Gastrocnemius medialis (tissue), 4 donors: ENCODE measurements at regions of chr12 and their contacts with region 1.

Region 1: GRCh38 chr12:53047221-53048042 is 2.4 kb upstream of the TNS2 start:
- DNase-seq: peak; percentile 72 to 82
- ATAC-seq: peak; percentile 17 to 20
- H3K4me3 ChIP-seq: peak overlapping the region; percentile 83 to 97 (median 95)
- H3K27ac ChIP-seq: peak overlapping the region; percentile 100
- H3K4me1 ChIP-seq: peaks cover 42 to 63% of the 10 kb centered on the region in 2 donors
- H3K27me3 ChIP-seq: no peaks in the 10 kb centered on the region
- CTCF ChIP-seq: peak in 4 of 5 experiments; percentile 35 to 77 (median 57)
- POLR2A ChIP-seq: peak; percentile 81 to 89

Region 2: GRCh38 chr12:52041695-52042123 is 1005.7 kb before region 1 on chr12:
- in situ Hi-C with region 1: no loop called
- intact Hi-C with region 1: loop called (anchors 5 kb)
- DNase-seq: no peak
- ATAC-seq: no peak
- H3K4me3 ChIP-seq: no peak overlapping the region
- H3K27ac ChIP-seq: peak overlapping the region; percentile 90 to 98 (median 94)
- H3K4me1 ChIP-seq: peaks cover 46 to 51% of the 10 kb centered on the region in 2 donors
- H3K27me3 ChIP-seq: no peaks in the 10 kb centered on the region
- CTCF ChIP-seq: no peak
- POLR2A ChIP-seq: no peak

Region 3: DNA sequence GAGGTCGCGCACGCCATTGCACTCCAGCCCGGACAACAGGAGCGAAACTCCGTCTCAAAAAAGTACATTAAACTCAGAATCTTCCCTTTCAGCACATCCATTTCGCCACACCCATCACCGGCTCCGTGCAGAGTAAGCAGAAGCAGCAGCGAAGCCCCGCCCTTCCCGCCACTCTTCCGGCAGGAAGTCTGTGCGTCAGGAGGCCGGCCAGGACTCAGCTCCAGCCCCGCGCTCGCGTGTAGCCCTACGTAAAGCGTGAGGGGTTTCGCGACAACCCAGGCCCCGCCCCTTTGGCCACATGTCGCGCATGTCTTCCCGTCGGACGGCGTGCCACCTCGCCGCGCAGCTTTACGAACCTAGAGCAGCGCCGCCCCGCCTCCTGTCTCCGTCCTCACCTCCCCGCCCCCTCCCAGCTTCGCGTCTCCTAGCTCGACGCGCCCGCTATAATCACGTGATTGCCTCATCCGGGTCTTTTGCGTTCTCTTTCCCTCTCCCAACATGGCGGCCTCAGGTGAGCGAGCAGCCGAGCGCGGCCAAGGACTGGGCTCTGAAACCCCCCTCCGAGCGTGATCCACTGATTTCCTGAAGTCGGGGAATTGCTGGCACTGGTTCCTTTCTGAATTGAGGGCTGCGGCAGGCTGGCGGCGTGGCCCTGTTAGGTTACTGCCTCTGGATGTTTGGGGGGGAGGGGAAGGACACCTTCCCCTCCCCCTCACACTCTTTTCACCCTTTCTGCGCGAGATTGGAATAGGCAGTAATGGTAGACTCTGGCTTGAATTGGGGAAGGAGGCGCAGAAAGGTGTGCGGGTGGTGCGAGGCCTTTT is 41.2 kb before region 1 on chr12 and contains the start of gene EIF4B:
- in situ Hi-C with region 1: no loop called
- intact Hi-C with region 1: loop called (anchors 2 kb)
- DNase-seq: peak; percentile 100
- ATAC-seq: peak; percentile 92 to 93
- H3K4me3 ChIP-seq: peak within 1 kb of the TSS; percentile 86 to 97 (median 94)
- H3K27ac ChIP-seq: peak within 1 kb of the TSS; percentile 95 to 98 (median 96)
- H3K4me1 ChIP-seq: peaks cover 45 to 46% of the 10 kb centered on the region in 2 donors
- H3K27me3 ChIP-seq: no peaks in the 10 kb centered on the region
- CTCF ChIP-seq: peak in 2 of 5 experiments; percentile 33 to 42
- POLR2A ChIP-seq: peak; percentile 87 to 88
- total RNA-seq, gene EIF4B: 667 to 821 (median 740) TPM